A673 (cell line): ENCODE measurements at regions of chr2 and their contacts with region 1.

Region 1: DNA sequence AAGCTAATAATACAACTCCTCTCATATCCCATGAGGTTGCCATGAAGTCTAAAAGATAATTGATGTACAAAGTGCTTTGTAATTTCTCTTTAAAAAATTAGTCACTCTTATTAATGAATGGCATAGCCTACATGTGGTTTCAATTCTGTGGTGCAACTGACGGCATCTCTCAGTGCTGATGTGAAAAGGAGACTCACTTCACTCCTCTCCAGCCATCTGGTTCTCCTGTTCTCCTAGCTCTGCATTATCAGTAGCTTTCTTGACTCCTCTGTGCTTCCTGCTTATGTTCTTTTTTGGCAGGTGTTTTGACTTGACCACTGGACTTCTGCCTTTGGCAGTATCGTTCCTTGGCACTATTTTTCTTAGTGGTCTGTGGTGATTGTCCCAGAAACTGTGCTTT is 134.9 kb upstream of the ZFP36L2 start:
- DNase-seq: no peak
- H3K4me3 ChIP-seq: no peak overlapping the region
- H3K27ac ChIP-seq: no peak overlapping the region
- H3K4me1 ChIP-seq: no peaks in the 10 kb centered on the region
- H3K27me3 ChIP-seq: no peaks in the 10 kb centered on the region
- CTCF ChIP-seq: no peak

Region 2: GRCh38 chr2:43387092-43388062 is 26.1 kb after region 1 on chr2:
- CTCF ChIA-PET with region 1: no interaction called
- POLR2A ChIA-PET with region 1: no interaction called
- intact Hi-C with region 1: loop called (anchors 2 kb)
- DNase-seq: no peak
- H3K4me3 ChIP-seq: no peak overlapping the region
- H3K27ac ChIP-seq: no peak overlapping the region
- H3K4me1 ChIP-seq: no peaks in the 10 kb centered on the region
- H3K27me3 ChIP-seq: no peaks in the 10 kb centered on the region
- CTCF ChIP-seq: no peak

Region 3: GRCh38 chr2:43685357-43685756 is 324.1 kb after region 1 on chr2:
- CTCF ChIA-PET with region 1: no interaction called
- POLR2A ChIA-PET with region 1: no interaction called
- intact Hi-C with region 1: no loop called
- DNase-seq: no peak
- H3K4me3 ChIP-seq: no peak overlapping the region
- H3K27ac ChIP-seq: no peak overlapping the region
- H3K4me1 ChIP-seq: no peaks in the 10 kb centered on the region
- H3K27me3 ChIP-seq: no peaks in the 10 kb centered on the region
- CTCF ChIP-seq: no peak